Activated CD8-positive, alpha-beta T cell treated with anti-CD3 and anti-CD28 coated beads, Interleukin-2, amount 10 ng/mL, durations not matched to agents 7 days and 5 days (primary cell): ENCODE measurements at regions of chr5 and their contacts with region 1.

Region 1: GRCh38 chr5:64612344-64612961 is 77.8 kb upstream of the SHISAL2B start:
- DNase-seq: peak; percentile 32
- ATAC-seq: no peak
- H3K4me3 Mint-ChIP-seq: no peak overlapping the region
- H3K27ac Mint-ChIP-seq: no peak overlapping the region
- H3K4me1 Mint-ChIP-seq: no peaks in the 10 kb centered on the region
- H3K27me3 Mint-ChIP-seq: peaks cover 19% of the 10 kb centered on the region

Region 2: GRCh38 chr5:64229163-64229774 is 383.2 kb before region 1 on chr5:
- CTCF ChIA-PET with region 1: interaction called, 20 read pairs
- POLR2A ChIA-PET with region 1: no interaction called
- DNase-seq: no peak
- ATAC-seq: no peak
- H3K4me3 Mint-ChIP-seq: no peak overlapping the region
- H3K27ac Mint-ChIP-seq: no peak overlapping the region
- H3K4me1 Mint-ChIP-seq: no peaks in the 10 kb centered on the region
- H3K27me3 Mint-ChIP-seq: no peaks in the 10 kb centered on the region